Prostate gland (tissue), 2 donors: ENCODE measurements at regions of chr1 and their contacts with region 1.

Region 1: DNA sequence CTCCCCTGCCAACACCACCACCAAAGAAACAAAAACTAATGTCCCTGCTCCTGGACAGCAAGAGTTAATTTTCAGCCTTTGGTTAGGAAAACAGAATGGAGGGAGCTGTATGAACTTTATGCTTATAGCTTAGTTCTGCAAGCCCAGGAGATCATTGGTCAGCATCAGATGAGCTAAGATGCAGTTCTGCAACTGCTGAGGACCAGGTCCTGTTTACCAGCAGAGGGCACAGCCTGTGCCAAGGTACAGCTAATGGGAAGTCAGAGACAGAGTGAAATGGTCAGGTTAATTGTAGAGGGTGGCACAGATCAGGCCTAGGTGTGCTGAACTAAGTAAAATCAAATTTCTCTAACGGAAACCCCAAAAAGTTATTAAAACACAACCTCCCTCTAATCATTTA is 161.3 kb downstream of the ROR1 start:
- DNase-seq: peak; percentile 11
- H3K4me3 ChIP-seq: no peak overlapping the region
- H3K27ac ChIP-seq: no peak overlapping the region
- H3K4me1 ChIP-seq: no peaks in the 10 kb centered on the region
- H3K27me3 ChIP-seq: no peaks in the 10 kb centered on the region
- CTCF ChIP-seq: peak in 3 of 4 experiments; percentile 16 to 38 (median 30)
- POLR2A ChIP-seq: no peak

Region 2: GRCh38 chr1:64231153-64231552 is 296.0 kb after region 1 on chr1:
- intact Hi-C with region 1: loop called (anchors 10 kb)
- DNase-seq: no peak
- H3K4me3 ChIP-seq: no peak overlapping the region
- H3K27ac ChIP-seq: no peak overlapping the region
- H3K4me1 ChIP-seq: no peaks in the 10 kb centered on the region
- H3K27me3 ChIP-seq: no peaks in the 10 kb centered on the region
- CTCF ChIP-seq: no peak
- POLR2A ChIP-seq: no peak

Region 3: DNA sequence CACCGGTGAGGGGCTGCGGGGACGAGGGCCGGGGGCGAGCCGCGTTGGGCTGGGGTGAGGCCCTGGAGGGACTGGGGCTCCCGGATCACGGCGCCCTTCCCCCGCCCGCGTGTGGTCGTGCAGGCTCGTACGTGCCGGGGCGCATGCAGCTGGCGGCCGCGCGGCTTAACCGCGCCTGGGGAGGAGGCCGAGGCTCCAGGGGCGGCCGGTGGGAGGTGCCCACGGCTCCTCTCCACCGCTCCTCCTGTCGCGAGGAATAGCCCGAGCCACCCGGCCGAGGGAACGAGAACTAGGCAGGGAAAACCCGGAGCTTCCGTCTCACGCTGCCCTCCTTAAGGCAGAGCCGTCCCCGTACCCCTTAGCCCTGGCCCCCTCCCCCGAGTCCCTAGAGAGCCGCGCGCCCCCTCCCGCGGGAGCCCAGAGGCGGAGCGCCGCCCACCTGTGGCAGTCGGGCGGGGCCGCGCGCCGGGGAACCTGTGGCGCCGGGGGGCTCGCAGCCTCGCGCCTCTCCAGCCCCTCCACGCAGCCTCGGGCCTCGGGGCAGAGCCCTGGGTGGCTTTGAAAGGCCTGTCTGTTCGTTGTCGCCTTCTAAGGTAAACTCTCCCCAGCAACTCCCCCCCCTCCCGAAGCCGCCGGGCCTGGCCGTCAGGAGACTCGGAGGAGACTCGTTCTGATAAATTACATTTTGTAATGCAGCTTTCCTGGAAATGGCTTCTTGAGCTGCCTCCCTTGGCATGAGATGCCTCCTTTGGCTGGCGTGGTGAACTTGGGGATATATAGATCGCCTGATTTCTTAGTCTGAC is 1213.6 kb after region 1 on chr1:
- intact Hi-C with region 1: no loop called
- DNase-seq: peak; percentile 54
- H3K4me3 ChIP-seq: peak overlapping the region; percentile 66 to 75
- H3K27ac ChIP-seq: peak overlapping the region; percentile 91 to 92
- H3K4me1 ChIP-seq: no peaks in the 10 kb centered on the region
- H3K27me3 ChIP-seq: no peaks in the 10 kb centered on the region
- CTCF ChIP-seq: no peak
- POLR2A ChIP-seq: peak; percentile 27